Naive thymus-derived CD4-positive, alpha-beta T cell (primary cell): ENCODE measurements at regions of chr20 and their contacts with region 1.

Region 1: DNA sequence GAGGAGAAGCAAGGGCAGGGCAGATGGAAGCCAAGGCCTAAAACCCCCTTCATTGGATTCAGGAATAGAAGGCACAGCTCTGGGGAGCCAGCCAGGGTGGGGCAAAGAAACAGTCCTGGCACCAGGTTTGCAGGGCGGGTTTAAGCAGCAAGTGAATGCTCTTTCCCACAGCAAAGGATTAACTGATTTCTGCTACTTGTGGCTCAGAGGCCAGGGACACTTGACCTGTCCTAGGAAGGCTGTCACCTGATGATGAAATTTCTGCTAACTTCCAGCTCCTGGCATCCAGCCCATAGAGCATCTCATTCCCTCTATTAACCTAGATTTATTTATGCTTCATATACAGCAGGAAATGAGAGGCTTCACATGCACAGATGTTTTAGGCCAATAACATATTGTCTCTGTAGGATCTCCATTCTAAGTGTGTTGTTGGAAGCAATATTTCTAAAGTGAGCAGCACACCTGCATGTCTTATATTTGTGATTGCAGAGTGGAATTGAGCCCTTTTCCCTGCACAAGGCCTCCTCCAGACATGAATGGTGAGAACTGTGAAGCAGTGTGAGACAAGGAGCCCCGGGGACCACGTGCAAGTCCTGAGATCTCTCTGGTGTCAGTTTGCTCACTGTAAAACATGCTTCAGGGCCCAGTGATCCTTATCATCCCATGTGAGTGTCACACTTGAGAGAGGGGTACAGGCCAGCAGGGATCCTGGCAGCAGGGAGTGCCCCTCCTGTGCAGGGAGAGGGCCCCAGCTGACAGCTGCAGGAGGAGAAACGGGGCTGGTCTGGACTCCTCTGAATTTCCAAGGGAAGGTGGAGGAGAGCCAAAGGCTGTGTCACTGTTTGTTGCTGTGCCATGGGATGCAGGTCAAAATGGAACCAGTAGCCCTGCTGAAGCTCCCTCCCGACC is 41.1 kb upstream of the CST5 start:
- DNase-seq: peak in 1 of 9 donors; percentile 11
- ATAC-seq: no peak
- H3K4me3 ChIP-seq: no peak overlapping the region
- H3K4me3 Mint-ChIP-seq: peak overlapping the region in 7 of 10 donors; percentile 7 to 71 (median 46)
- H3K27ac ChIP-seq: no peak overlapping the region
- H3K27ac Mint-ChIP-seq: peak overlapping the region in 8 of 9 donors; percentile 22 to 94 (median 80)
- H3K4me1 ChIP-seq: peaks cover 24 to 29% of the 10 kb centered on the region in 2 donors
- H3K4me1 Mint-ChIP-seq: peaks cover 15 to 35% (median 30%) of the 10 kb centered on the region in 7 donors
- H3K27me3 ChIP-seq: no peaks in the 10 kb centered on the region
- H3K27me3 Mint-ChIP-seq: peaks cover 0 to 9% (median 0%) of the 10 kb centered on the region in 5 donors

Region 2: DNA sequence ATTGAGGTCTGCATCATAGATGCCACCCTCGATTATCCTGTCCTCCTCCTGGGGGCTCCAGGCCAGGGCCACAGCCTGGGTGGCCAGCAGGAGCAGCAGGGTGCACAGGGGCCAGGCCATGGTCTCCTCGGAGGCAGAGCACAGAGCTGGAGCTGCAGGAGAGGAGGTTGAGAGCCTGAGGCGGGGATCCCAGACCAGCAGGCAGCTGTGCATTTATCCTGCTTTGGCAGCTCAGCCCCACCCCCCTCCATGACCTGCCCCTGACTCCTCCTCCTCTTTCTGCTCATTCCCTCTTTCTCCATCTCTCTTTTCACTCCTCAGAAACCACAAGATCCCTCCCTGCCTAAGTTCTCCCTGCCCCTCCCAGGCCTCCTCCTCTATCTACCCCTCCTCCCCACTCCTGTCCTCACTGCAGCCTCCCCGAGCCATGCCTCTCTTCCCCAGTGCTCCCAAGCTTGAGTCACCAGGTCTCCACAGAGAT is 94.1 kb before region 1 on chr20 and contains the start of gene CST2:
- CTCF ChIA-PET with region 1: no interaction called
- POLR2A ChIA-PET with region 1: no interaction called
- intact Hi-C with region 1: no loop called
- DNase-seq: no peak
- ATAC-seq: no peak
- H3K4me3 ChIP-seq: no peak within 1 kb of the TSS
- H3K4me3 Mint-ChIP-seq: no peak within 1 kb of the TSS
- H3K27ac ChIP-seq: no peak within 1 kb of the TSS
- H3K27ac Mint-ChIP-seq: no peak within 1 kb of the TSS
- H3K4me1 ChIP-seq: no peaks in the 10 kb centered on the region
- H3K4me1 Mint-ChIP-seq: no peaks in the 10 kb centered on the region
- H3K27me3 ChIP-seq: no peaks in the 10 kb centered on the region
- H3K27me3 Mint-ChIP-seq: peaks cover 0 to 28% (median 15%) of the 10 kb centered on the region in 5 donors
- total RNA-seq, gene CST2: not detected

Region 3: GRCh38 chr20:23907579-23907978 is 13.1 kb before region 1 on chr20:
- CTCF ChIA-PET with region 1: interaction called, 3 read pairs
- POLR2A ChIA-PET with region 1: interaction called, 5 read pairs
- intact Hi-C with region 1: loop called in 1 of 2 experiments (anchors 1 kb)
- DNase-seq: no peak
- ATAC-seq: no peak
- H3K4me3 ChIP-seq: no peak overlapping the region
- H3K4me3 Mint-ChIP-seq: no peak overlapping the region
- H3K27ac ChIP-seq: no peak overlapping the region
- H3K27ac Mint-ChIP-seq: no peak overlapping the region
- H3K4me1 ChIP-seq: peaks cover 0 to 2% of the 10 kb centered on the region in 2 donors
- H3K4me1 Mint-ChIP-seq: peaks cover 0 to 33% (median 8%) of the 10 kb centered on the region in 7 donors
- H3K27me3 ChIP-seq: no peaks in the 10 kb centered on the region
- H3K27me3 Mint-ChIP-seq: peaks cover 0 to 24% (median 6%) of the 10 kb centered on the region in 5 donors